Heart right ventricle (tissue), 16 donors: ENCODE measurements at regions of chr3 and their contacts with region 1.

Region 1: GRCh38 chr3:169149349-169149890 is 514.1 kb downstream of the MECOM start:
- DNase-seq: peak; percentile 84 to 85
- ATAC-seq: peak; percentile 80 to 91 (median 82)
- H3K4me3 ChIP-seq: peak overlapping the region in 9 of 10 donors; percentile 13 to 69 (median 61)
- H3K27ac ChIP-seq: peak overlapping the region; percentile 26 to 96 (median 78)
- H3K4me1 ChIP-seq: peaks cover 0 to 38% (median 16%) of the 10 kb centered on the region in 9 donors
- H3K27me3 ChIP-seq: peaks cover 0 to 78% (median 32%) of the 10 kb centered on the region in 7 donors
- CTCF ChIP-seq: peak; percentile 67 to 93 (median 86)

Region 2: GRCh38 chr3:168061332-168061996 is 1088.0 kb before region 1 on chr3:
- intact Hi-C with region 1: loop called in 1 of 10 experiments (anchors 10 kb)
- DNase-seq: no peak
- ATAC-seq: no peak
- H3K4me3 ChIP-seq: no peak overlapping the region
- H3K27ac ChIP-seq: no peak overlapping the region
- H3K4me1 ChIP-seq: peaks cover 4 to 70% (median 37%) of the 10 kb centered on the region in 9 donors
- H3K27me3 ChIP-seq: no peaks in the 10 kb centered on the region
- CTCF ChIP-seq: no peak

Region 3: GRCh38 chr3:169218314-169218983 is 69.0 kb after region 1 on chr3:
- intact Hi-C with region 1: loop called in 1 of 10 experiments (anchors 5 kb)
- DNase-seq: peak; percentile 12 to 59
- ATAC-seq: peak in 7 of 8 donors; percentile 68 to 92 (median 85)
- H3K4me3 ChIP-seq: no peak overlapping the region
- H3K27ac ChIP-seq: peak overlapping the region in 3 of 10 donors; percentile 13 to 58 (median 19)
- H3K4me1 ChIP-seq: peaks cover 0 to 18% (median 4%) of the 10 kb centered on the region in 9 donors
- H3K27me3 ChIP-seq: no peaks in the 10 kb centered on the region
- CTCF ChIP-seq: peak; percentile 28 to 77 (median 60)

Region 4: DNA sequence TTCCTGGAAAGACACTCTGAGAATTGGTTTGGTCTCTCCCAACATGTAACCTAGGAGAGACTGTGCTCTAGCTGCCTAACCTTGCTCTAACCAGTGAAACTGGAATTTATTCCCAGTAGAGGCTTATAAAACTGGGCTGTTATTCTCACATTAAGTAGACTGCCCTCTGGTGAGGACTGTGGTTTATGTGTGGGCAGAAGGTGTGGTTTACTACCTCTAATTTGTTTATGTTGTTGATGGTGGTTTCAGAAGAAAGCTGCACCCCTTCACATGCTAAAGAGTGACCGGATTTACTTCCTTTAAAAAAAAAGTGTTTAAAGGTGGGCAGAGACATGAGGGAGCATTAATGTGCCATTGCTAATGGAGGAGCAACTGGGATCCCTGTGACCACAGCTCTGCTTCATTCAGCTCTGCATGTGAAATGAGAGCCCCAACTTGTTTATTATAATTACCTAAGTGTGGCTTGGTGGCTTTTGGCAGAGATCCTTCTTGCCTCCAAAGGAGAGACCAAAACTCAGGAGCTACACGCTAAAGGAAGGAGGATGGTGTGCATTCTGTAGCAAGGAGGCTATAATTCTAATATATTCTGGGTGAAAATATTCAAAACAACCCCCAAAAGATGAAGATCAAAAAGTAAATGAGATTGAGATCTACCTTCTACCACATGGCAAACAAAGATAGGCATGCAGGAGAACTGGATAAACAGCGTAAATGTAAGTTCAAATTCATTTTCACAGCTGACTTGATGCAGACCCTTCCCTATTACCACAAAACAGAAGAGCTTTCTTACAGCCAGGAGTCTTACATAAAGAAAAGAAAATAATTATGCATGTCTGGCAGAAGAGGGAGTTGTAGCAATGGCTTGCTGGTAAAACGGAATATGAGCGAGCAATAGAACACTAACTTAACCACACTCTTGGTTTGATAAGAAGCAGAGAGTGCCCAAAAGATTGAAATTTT is 241.1 kb after region 1 on chr3:
- intact Hi-C with region 1: loop called in 3 of 10 experiments (anchors 2 to 10 kb)
- DNase-seq: no peak
- ATAC-seq: peak in 1 of 8 donors; percentile 43
- H3K4me3 ChIP-seq: no peak overlapping the region
- H3K27ac ChIP-seq: peak overlapping the region in 3 of 10 donors; percentile 11 to 86 (median 59)
- H3K4me1 ChIP-seq: peaks cover 0 to 38% (median 31%) of the 10 kb centered on the region in 9 donors
- H3K27me3 ChIP-seq: no peaks in the 10 kb centered on the region
- CTCF ChIP-seq: peak in 3 of 9 donors; percentile 6 to 20 (median 8)

Region 5: DNA sequence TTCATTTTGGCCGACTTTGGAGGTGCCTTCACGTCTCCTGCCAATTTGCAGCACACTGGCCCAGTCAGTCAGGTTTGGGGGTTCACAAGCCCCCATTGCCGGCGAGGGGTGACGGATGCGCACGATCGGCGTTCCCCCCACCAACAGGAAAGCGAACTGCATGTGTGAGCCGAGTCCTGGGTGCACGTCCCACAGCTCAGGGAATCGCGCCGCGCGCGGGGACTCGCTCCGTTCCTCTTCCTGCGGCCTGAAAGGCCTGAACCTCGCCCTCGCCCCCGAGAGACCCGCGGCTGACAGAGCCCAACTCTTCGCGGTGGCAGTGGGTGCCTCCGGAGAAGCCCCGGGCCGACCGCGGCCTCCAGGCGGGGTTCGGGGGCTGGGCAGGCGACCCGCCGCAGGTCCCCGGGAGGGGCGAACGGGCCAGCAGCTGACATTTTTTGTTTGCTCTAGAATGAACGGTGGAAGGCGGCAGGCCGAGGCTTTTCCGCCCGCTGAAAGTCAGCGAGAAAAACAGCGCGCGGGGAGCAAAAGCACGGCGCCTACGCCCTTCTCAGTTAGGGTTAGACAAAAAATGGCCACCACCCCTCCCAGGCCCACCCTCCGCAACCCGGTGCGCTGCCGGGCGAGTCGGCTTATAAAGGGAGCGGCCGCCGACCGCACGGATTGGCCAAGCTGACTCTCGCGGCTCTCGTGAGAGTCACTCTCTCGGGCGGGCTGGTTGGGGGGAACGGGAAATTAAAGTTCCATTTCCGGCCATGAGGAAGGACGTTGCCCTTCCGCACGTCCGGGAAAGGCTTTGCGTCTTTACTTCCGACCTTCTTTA is 615.2 kb after region 1 on chr3 and contains the start of gene TERC:
- intact Hi-C with region 1: loop called in 2 of 10 experiments (anchors 10 kb)
- DNase-seq: peak; percentile 92 to 95
- ATAC-seq: peak; percentile 96 to 98 (median 97)
- H3K4me3 ChIP-seq: peak within 1 kb of the TSS; percentile 57 to 95 (median 89)
- H3K27ac ChIP-seq: peak within 1 kb of the TSS; percentile 95 to 100 (median 98)
- H3K4me1 ChIP-seq: peaks cover 0 to 24% (median 5%) of the 10 kb centered on the region in 9 donors
- H3K27me3 ChIP-seq: no peaks in the 10 kb centered on the region
- CTCF ChIP-seq: peak in 2 of 9 donors; percentile 2 to 9
- total RNA-seq, gene TERC: 0.81 to 5.1 (median 2.8) TPM in 7 of 10 donors, not detected in the others